SK-N-SH (cell line): ENCODE measurements at regions of chr1 and their contacts with region 1.

Region 1: GRCh38 chr1:223133824-223134435 is 9.1 kb downstream of the TLR5 start:
- DNase-seq: peak; percentile 93
- H3K4me3 ChIP-seq: peak overlapping the region; percentile 45 to 58
- H3K27ac ChIP-seq: no peak overlapping the region
- H3K4me1 ChIP-seq: peaks cover 10 to 16% of the 10 kb centered on the region in 2 experiments; a peak in 3 of 4 replicates
- H3K27me3 ChIP-seq: peaks cover 29% of the 10 kb centered on the region
- CTCF ChIP-seq: peak; percentile 95
- EP300 ChIP-seq: no peak
- RAD21 ChIP-seq: peak; percentile 77

Region 2: DNA sequence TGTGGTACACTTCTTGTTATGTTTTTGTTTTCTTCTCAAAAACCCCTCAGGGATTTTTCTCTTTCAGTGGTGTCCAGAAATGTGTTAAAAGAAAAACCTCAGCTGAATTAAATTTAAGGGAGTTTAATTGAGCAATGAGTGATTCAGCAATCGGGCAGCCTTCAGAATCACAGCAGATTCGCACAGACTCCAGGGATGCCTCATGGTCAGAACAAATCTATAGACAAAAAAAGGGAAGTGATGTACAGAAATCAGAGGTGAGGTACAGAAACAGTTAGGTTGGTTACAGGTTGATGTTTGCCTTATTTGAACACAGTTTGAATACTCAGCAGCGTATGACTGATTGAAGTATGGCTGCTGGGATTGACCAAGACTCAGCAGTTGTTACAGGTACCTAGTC is 77.1 kb before region 1 on chr1:
- CTCF ChIA-PET with region 1: no interaction called
- POLR2A ChIA-PET with region 1: no interaction called
- DNase-seq: no peak
- H3K4me3 ChIP-seq: no peak overlapping the region
- H3K27ac ChIP-seq: no peak overlapping the region
- H3K4me1 ChIP-seq: no peaks in the 10 kb centered on the region
- H3K27me3 ChIP-seq: peaks cover 18% of the 10 kb centered on the region; the same call in 1 of the 2 replicates
- CTCF ChIP-seq: no peak
- EP300 ChIP-seq: no peak
- RAD21 ChIP-seq: no peak

Region 3: DNA sequence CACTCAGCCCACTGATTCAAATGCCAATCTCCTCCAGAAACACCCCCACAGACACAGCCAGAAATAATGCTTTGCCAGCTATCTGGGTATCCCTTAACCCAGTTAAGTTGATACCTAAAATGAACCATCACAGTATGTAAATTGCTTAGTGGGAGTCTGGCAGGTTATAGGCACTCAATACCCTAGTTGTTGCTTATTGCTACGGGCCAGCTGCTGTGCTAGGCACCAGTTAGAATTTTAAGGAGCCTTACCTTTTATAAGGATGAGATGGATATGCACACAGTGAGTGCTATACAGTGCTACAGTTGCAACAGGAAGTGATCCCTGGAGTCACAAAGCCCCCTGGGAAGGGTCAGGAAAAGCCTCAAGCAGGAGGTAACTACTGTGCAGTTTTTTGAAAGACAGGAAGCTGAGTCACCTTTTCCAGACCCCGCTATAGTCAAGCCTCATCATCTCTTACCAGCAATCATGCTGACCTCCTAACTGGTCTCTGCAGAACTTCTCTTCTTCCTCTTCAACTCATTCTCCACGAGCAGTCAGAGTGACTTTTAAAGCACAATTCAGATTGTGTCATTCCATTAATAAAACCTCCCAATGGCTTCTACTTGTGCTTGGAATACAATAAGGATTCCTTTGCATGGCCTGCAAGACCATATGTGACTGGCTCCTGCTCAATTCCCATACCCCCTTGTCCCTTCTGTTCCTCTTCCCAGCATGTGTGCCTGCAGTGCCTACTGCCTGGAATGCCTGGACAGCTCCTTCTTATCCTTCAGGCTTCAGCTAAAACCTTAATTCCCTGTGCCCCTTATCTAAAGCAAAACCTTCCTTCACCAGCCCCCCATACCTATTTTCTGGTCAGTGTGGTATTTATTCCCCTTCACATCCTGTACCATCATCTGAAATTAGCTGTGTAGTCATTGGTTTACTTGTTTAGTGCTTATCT is 19.5 kb after region 1 on chr1:
- CTCF ChIA-PET with region 1: interaction called, 34 read pairs
- POLR2A ChIA-PET with region 1: no interaction called
- DNase-seq: no peak
- H3K4me3 ChIP-seq: no peak overlapping the region
- H3K27ac ChIP-seq: no peak overlapping the region
- H3K4me1 ChIP-seq: no peaks in the 10 kb centered on the region; a peak in 1 of 4 replicates
- H3K27me3 ChIP-seq: peaks cover 5% of the 10 kb centered on the region; the same call in 1 of the 2 replicates
- CTCF ChIP-seq: no peak
- EP300 ChIP-seq: no peak
- RAD21 ChIP-seq: no peak

Region 4: GRCh38 chr1:223244366-223245103 is 110.6 kb after region 1 on chr1:
- CTCF ChIA-PET with region 1: interaction called, 14 read pairs
- POLR2A ChIA-PET with region 1: no interaction called
- DNase-seq: peak; percentile 37
- H3K4me3 ChIP-seq: no peak overlapping the region
- H3K27ac ChIP-seq: no peak overlapping the region
- H3K4me1 ChIP-seq: peaks cover 0 to 3% of the 10 kb centered on the region in 2 experiments; a peak in 1 of 4 replicates
- H3K27me3 ChIP-seq: peaks cover 9% of the 10 kb centered on the region; the same call in 1 of the 2 replicates
- CTCF ChIP-seq: peak; percentile 45
- EP300 ChIP-seq: no peak
- RAD21 ChIP-seq: peak; percentile 56

Region 5: GRCh38 chr1:223264983-223265908 is 131.3 kb after region 1 on chr1:
- CTCF ChIA-PET with region 1: interaction called, 10 read pairs
- POLR2A ChIA-PET with region 1: no interaction called
- DNase-seq: no peak
- H3K4me3 ChIP-seq: no peak overlapping the region
- H3K27ac ChIP-seq: no peak overlapping the region
- H3K4me1 ChIP-seq: peaks cover 0 to 14% of the 10 kb centered on the region in 2 experiments; a peak in 2 of 4 replicates
- H3K27me3 ChIP-seq: peaks cover 31% of the 10 kb centered on the region; the same call in 1 of the 2 replicates
- CTCF ChIP-seq: no peak
- EP300 ChIP-seq: no peak
- RAD21 ChIP-seq: no peak

Region 6: GRCh38 chr1:223363856-223364684 is 230.1 kb after region 1 on chr1 and contains the start of gene SUSD4:
- CTCF ChIA-PET with region 1: interaction called, 12 read pairs
- POLR2A ChIA-PET with region 1: no interaction called
- DNase-seq: peak; percentile 88
- H3K4me3 ChIP-seq: peak within 1 kb of the TSS; percentile 51 to 54
- H3K27ac ChIP-seq: no peak within 1 kb of the TSS
- H3K4me1 ChIP-seq: peaks cover 0 to 9% of the 10 kb centered on the region in 2 experiments; a peak in 1 of 4 replicates
- H3K27me3 ChIP-seq: peaks cover 45% of the 10 kb centered on the region
- CTCF ChIP-seq: no peak
- EP300 ChIP-seq: no peak
- RAD21 ChIP-seq: no peak
- polyA plus RNA-seq, gene SUSD4: 0.21 and 0.31 TPM in 2 replicates

Region 7: DNA sequence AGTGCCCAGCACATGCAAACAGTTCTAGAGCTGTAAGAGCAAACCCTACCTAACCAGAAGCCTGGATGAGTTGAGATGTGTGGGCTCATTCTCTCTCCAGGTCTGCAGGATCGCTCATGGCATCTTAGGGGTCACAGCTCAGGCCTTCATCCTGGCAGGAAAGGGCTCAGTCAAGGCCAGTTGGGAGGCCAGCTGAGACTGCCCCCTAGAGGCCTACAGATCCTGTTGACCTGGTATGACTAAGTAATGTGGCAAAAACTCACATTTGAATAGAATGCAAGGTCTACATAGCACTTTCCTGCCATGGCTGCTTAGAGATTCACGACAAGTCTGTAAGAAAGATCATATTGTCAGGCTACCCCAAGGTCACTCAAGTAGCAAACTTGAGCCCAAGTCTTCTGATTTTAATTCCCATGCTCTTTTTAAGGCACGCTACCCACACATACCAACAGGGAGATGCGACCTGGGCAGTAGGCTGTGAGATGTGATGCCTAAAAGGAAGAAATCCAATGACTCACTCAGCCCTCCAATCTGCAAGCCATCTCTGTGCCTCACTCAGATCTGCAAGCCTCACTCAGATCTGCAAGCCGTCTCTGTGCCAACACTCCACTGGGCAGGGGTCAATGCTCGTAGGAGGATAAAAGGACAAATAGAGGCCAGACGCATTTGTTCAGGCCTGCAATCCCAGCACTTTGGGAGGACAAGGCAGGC is 536.7 kb after region 1 on chr1:
- CTCF ChIA-PET with region 1: interaction called, 16 read pairs
- POLR2A ChIA-PET with region 1: no interaction called
- DNase-seq: peak; percentile 46
- H3K4me3 ChIP-seq: no peak overlapping the region
- H3K27ac ChIP-seq: no peak overlapping the region
- H3K4me1 ChIP-seq: no peaks in the 10 kb centered on the region
- H3K27me3 ChIP-seq: no peaks in the 10 kb centered on the region; the same call in 1 of the 2 replicates
- CTCF ChIP-seq: peak; percentile 53
- EP300 ChIP-seq: no peak
- RAD21 ChIP-seq: peak; percentile 54

Region 8: DNA sequence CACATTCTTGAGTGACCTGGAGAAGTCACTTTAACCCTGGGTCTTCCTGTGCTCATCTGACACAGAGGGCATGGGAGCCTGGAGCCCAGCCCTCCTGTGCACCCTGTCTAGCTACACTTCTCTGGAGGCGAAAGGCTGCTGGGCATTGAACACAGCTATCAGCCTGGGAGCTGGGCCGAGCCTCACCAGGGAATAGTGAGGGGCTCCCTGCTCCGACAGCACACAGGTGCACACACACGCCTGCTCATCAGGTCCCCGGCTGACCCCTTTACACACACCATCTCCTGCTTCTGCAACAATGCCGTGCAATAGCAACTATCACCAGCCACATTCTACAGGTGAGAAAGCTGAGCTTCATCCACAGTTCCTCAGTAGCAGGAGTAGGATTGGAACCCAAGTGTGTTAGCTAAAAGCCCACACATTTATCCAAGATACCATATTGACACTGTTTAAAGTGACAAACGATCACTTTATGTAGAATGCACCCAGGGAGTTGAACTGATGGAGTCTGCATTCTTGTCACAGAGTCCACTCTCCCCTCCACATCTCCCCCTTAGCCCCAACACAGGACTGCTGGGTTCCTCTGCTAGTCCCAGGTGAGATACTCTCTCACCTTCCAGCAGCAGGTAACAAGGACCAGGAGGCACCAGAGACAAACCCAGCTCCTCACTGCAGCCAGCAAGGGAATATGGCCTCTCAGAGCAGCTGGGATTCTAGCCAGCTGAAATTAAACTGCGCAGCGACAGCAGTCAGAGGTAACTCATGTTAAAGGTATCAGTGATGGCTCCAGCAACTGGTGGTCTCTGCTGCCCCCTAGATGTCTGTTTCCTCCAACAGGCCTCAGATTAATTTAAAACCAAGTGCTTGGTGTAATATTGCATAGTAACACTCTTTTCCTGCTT is 549.9 kb after region 1 on chr1:
- CTCF ChIA-PET with region 1: interaction called, 130 read pairs
- POLR2A ChIA-PET with region 1: no interaction called
- DNase-seq: peak; percentile 60
- H3K4me3 ChIP-seq: no peak overlapping the region; a peak in 1 of 4 replicates
- H3K27ac ChIP-seq: no peak overlapping the region
- H3K4me1 ChIP-seq: no peaks in the 10 kb centered on the region; a peak in 1 of 4 replicates
- H3K27me3 ChIP-seq: peaks cover 33% of the 10 kb centered on the region; the same call in 1 of the 2 replicates
- CTCF ChIP-seq: peak; percentile 73
- EP300 ChIP-seq: no peak
- RAD21 ChIP-seq: peak; percentile 94